ENCODE measurements at regions of chr16 and their contacts with region 1.

Region 1: GRCh38 chr16:71564155-71564967 is 12.5 kb downstream of the TAT start:
- DNase-seq: peak in 1 of 3 donors; percentile 94
- H3K4me3 ChIP-seq: peak overlapping the region; percentile 47 to 85 (median 75)
- H3K27ac ChIP-seq: peak overlapping the region; percentile 47 to 80
- H3K4me1 ChIP-seq: peaks cover 0 to 17% (median 9%) of the 10 kb centered on the region in 4 experiments
- H3K27me3 ChIP-seq: peaks cover 0 to 2% (median 0%) of the 10 kb centered on the region in 5 experiments

Region 2: DNA sequence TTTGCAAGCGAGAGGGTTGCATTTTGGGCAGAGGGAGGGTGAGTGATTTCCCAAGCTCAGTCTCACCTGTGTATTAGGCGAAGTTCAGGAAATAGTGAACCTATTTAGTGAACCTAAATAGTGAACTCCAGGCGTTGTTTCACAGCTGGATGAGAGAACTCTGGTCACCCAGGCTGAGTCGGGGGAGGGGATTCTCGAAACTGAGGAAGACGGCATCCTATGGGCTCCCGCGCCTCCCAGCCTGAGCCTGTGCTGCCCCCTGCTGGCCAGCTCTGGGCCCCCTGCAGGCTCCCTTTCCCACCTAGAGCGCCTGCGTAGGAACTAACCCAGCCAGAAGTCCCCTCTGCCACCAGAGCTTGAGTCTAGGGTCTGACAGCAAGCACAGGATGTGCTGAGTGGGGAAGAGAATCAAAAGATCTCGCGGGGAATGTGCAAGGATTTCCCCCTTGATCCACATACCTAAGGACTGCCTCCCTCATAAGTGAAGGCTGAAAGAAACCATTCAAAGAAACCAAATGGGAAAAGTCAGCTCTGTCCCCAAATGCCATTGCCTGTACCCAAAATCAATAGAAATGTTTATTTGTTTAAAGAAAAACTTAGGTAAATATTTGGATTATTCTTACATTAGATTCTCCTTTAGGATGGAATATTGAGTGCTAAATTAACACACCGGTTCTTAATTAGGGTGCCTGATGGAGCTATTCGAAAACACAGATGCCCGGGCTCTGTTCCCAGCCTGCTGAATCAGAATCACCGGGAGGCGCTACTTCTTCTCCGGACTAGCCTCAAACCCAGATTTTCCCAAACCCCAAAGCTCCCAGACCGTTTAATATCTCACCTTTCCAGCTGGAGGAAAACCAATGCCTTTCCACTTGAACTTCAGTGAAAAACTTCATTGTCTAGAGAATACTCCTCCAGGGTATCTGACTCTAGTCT is 46.8 kb after region 1 on chr16:
- CTCF ChIA-PET with region 1: interaction called, 20 read pairs
- POLR2A ChIA-PET with region 1: no interaction called
- DNase-seq: peak; percentile 56 to 72 (median 70)
- H3K4me3 ChIP-seq: peak overlapping the region in 1 of 7 experiments; percentile 28
- H3K27ac ChIP-seq: no peak overlapping the region
- H3K4me1 ChIP-seq: peaks cover 0 to 3% (median under 1%) of the 10 kb centered on the region in 4 experiments
- H3K27me3 ChIP-seq: peaks cover 0 to 21% (median 3%) of the 10 kb centered on the region in 5 experiments

Region 3: GRCh38 chr16:71658771-71659170 is 94.4 kb after region 1 on chr16:
- CTCF ChIA-PET with region 1: no interaction called
- POLR2A ChIA-PET with region 1: no interaction called
- DNase-seq: no peak
- H3K4me3 ChIP-seq: no peak overlapping the region
- H3K27ac ChIP-seq: no peak overlapping the region
- H3K4me1 ChIP-seq: no peaks in the 10 kb centered on the region
- H3K27me3 ChIP-seq: no peaks in the 10 kb centered on the region